Calu3 (cell line): ENCODE measurements at regions of chr6 and their contacts with region 1.

Region 1: DNA sequence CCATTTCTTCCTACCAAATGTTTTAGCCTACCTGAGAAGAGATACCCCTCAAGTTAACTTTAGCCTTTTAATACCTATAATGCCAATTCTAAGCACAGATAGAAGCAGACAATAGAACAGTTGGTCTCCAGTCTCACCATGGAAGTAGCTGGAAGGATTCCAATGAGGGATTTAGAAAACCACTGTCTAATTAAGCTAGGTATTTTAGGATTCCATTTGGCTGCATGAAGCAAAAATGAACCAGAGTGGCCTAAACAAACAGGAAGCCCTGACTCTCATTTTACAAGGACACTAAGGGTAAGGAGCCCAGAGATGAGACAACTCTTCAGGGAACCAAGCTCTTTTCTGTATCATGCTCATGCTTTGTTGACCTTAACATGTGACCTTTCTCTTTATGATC is 199.2 kb downstream of the ALDH8A1 start:
- DNase-seq: no peak
- H3K4me3 Mint-ChIP-seq: no peak overlapping the region
- H3K27ac Mint-ChIP-seq: peak overlapping the region; percentile 54
- H3K4me1 Mint-ChIP-seq: peaks cover 30% of the 10 kb centered on the region
- H3K27me3 Mint-ChIP-seq: no peaks in the 10 kb centered on the region
- CTCF ChIP-seq: no peak

Region 2: DNA sequence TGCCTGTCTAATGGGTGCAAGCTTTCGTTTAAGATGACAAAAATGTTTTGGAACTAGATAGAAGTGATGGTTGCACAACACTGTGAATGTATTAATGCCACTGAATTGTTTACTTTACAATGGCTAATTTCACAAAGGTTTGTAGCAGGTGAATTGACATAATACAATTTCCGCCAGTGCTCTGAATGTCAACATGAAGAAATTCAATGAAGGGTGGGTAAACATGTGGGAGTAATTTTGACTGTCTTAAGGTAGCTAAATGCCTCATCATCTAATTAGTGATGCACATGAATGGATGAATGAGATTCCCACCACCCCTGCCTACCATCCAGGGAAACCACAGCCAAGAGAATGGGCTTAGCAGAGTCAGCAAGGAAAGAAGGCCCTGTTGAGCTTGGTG is 76.2 kb before region 1 on chr6:
- CTCF ChIA-PET with region 1: no interaction called
- intact Hi-C with region 1: loop called (anchors 5 kb)
- DNase-seq: no peak
- H3K4me3 Mint-ChIP-seq: no peak overlapping the region
- H3K27ac Mint-ChIP-seq: no peak overlapping the region
- H3K4me1 Mint-ChIP-seq: peaks cover 64% of the 10 kb centered on the region
- H3K27me3 Mint-ChIP-seq: no peaks in the 10 kb centered on the region
- CTCF ChIP-seq: no peak

Region 3: DNA sequence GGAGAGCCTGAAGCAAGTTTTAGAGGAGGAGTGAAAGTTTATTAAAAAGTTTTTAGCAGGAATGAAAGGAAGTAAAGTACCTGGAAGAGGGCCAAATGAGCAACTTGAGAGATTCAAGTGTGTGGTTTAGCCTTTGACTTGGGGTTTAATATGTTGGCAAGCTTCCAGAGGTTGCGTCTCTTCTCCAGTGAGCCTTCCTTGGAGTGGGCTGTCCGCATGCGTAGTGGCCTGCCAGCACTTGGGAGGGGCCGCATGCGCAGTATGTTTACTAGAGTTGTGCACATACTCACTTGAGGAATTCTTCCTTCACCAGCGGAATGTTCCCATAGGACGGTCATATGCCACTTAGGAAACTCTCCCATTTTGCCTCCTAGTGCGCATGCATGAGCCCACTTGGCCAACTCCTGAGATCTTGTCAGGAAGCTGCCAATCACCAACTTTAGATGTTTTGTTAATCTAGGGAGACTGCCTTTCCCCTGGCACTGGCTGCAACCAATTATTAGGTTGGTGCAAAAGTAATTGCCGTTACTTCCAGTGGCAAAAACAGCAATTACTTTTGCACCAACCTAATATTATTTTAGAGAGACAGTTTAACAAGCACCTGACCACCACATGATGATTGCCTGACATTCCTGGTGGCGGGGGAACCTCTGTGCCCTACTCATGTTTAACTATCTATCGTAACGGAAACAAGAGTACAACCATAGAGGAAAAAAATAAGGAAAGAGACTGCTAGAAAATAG is 35.8 kb before region 1 on chr6:
- CTCF ChIA-PET with region 1: no interaction called
- intact Hi-C with region 1: loop called (anchors 5 kb)
- DNase-seq: peak; percentile 76
- H3K4me3 Mint-ChIP-seq: peak overlapping the region; percentile 37
- H3K27ac Mint-ChIP-seq: peak overlapping the region; percentile 16
- H3K4me1 Mint-ChIP-seq: peaks cover 11% of the 10 kb centered on the region
- H3K27me3 Mint-ChIP-seq: no peaks in the 10 kb centered on the region
- CTCF ChIP-seq: no peak

Region 4: GRCh38 chr6:134768931-134769330 is 18.3 kb after region 1 on chr6:
- CTCF ChIA-PET with region 1: no interaction called
- intact Hi-C with region 1: no loop called
- DNase-seq: no peak
- H3K4me3 Mint-ChIP-seq: no peak overlapping the region
- H3K27ac Mint-ChIP-seq: no peak overlapping the region
- H3K4me1 Mint-ChIP-seq: no peaks in the 10 kb centered on the region
- H3K27me3 Mint-ChIP-seq: no peaks in the 10 kb centered on the region
- CTCF ChIP-seq: no peak

Region 5: DNA sequence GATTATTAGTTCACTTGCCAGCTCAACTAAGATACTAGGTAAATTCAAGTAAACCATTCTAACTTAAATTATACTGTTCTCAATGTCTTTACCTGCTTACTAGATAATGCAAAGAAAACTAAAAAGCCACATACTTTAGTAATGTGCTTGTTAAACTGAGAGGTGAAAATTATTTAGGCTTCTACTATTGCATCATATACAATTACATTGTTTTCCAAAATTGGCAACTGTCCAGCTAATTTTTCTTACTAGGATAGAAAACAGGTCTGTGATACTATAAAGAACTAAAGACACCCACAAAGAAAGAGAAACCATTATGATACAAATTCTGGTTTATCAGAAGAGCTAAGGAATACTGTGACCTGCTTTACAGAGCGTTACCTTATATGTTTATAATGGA is 244.9 kb after region 1 on chr6:
- CTCF ChIA-PET with region 1: no interaction called
- intact Hi-C with region 1: no loop called
- DNase-seq: no peak
- H3K4me3 Mint-ChIP-seq: no peak overlapping the region
- H3K27ac Mint-ChIP-seq: no peak overlapping the region
- H3K4me1 Mint-ChIP-seq: no peaks in the 10 kb centered on the region
- H3K27me3 Mint-ChIP-seq: no peaks in the 10 kb centered on the region
- CTCF ChIP-seq: no peak